ENCODE measurements at regions of chr1 and their contacts with region 1.

Region 1: DNA sequence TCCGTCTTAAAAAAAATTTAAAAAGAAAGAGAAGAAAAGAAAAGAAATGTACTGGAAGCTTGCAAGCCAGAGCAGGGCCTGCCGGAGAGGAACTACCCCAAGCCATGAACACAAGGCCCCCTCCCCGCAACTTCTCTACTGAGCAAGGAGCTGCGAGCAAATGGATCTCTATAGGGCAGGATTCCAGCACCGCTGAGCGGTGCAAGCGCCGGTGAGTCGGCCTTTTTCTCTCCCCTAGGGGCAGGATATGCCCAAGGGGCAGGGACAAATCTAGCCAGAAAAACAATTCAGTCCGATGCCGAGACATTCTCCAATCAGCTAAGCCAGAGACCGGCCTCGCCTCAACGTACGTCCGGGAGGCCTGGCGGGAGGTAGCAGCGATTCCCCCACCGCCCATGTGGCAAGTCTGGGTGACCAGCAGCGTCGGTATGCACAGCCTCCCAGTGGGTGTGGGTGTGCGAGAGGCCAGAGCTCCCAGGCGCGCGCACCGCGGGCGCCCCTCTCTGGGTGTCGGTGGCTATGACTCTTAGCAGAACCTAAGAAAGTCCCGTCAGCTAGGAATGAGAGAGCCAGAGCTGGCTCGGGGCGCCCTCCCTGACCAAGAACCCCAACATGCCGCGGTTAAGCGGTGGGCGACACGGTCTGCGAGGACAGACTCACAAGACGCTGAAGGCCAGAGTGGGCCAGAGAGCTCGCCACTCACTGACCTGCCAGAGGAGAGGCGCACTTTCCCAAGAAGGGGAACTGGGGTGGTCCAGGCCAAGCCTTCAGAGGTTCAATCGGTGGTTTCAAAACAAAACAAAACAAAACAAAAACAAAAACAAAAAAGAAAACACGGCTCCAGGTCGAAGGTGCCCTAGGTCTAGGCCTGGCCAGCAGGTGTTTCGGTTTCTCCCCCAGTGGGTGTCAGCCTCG is 1.9 kb downstream of the CSMD2 start:
- DNase-seq: peak; percentile 94

Region 2: GRCh38 chr1:33633019-33633801 is 529.9 kb before region 1 on chr1:
- intact Hi-C with region 1: loop called in 1 of 2 experiments (anchors 10 kb)
- DNase-seq: peak; percentile 97

Region 3: GRCh38 chr1:33735621-33736020 is 427.5 kb before region 1 on chr1:
- intact Hi-C with region 1: loop called (anchors 5 kb)
- DNase-seq: no peak